Head of caudate nucleus (tissue), 42 donors: ENCODE measurements at regions of chr15 and their contacts with region 1.

Region 1: GRCh38 chr15:27365441-27365840 is 394.5 kb downstream of the GABRG3 start:
- DNase-seq: no peak

Region 2: GRCh38 chr15:27479296-27480140 is 114.1 kb after region 1 on chr15:
- intact Hi-C with region 1: loop called (anchors 5 kb)
- DNase-seq: no peak

Region 3: GRCh38 chr15:27527490-27528067 is 162.1 kb after region 1 on chr15:
- intact Hi-C with region 1: no loop called
- DNase-seq: no peak